Caco-2 (cell line): ENCODE measurements at regions of chr7 and their contacts with region 1.

Region 1: GRCh38 chr7:152675759-152676636 is at the start of gene XRCC2:
- DNase-seq: peak; percentile 91 to 97
- H3K4me3 ChIP-seq: peak within 1 kb of the TSS; percentile 94
- H3K4me3 Mint-ChIP-seq: peak within 1 kb of the TSS; percentile 82
- H3K27ac Mint-ChIP-seq: peak within 1 kb of the TSS; percentile 90
- H3K4me1 ChIP-seq: peaks cover 12% of the 10 kb centered on the region; the same call in 1 of the 2 replicates
- H3K4me1 Mint-ChIP-seq: peaks cover 7% of the 10 kb centered on the region
- H3K27me3 ChIP-seq: no peaks in the 10 kb centered on the region
- H3K27me3 Mint-ChIP-seq: no peaks in the 10 kb centered on the region
- CTCF ChIP-seq: no peak
- total RNA-seq, gene XRCC2: 16.8 and 18.5 TPM in 2 replicates

Region 2: GRCh38 chr7:152664636-152665035 is 11.4 kb before region 1 on chr7:
- CTCF ChIA-PET with region 1: no interaction called
- POLR2A ChIA-PET with region 1: no interaction called
- intact Hi-C with region 1: loop called (anchors 1 kb)
- DNase-seq: peak; percentile 77 to 89
- H3K4me3 ChIP-seq: no peak overlapping the region
- H3K4me3 Mint-ChIP-seq: peak overlapping the region; percentile 3
- H3K27ac Mint-ChIP-seq: peak overlapping the region; percentile 53
- H3K4me1 ChIP-seq: peaks cover 20% of the 10 kb centered on the region
- H3K4me1 Mint-ChIP-seq: peaks cover 12% of the 10 kb centered on the region
- H3K27me3 ChIP-seq: no peaks in the 10 kb centered on the region
- H3K27me3 Mint-ChIP-seq: no peaks in the 10 kb centered on the region
- CTCF ChIP-seq: no peak

Region 3: GRCh38 chr7:152723364-152723763 is 47.4 kb after region 1 on chr7:
- CTCF ChIA-PET with region 1: no interaction called
- POLR2A ChIA-PET with region 1: no interaction called
- intact Hi-C with region 1: no loop called
- DNase-seq: no peak
- H3K4me3 ChIP-seq: no peak overlapping the region
- H3K4me3 Mint-ChIP-seq: no peak overlapping the region
- H3K27ac Mint-ChIP-seq: no peak overlapping the region
- H3K4me1 ChIP-seq: no peaks in the 10 kb centered on the region
- H3K4me1 Mint-ChIP-seq: no peaks in the 10 kb centered on the region
- H3K27me3 ChIP-seq: no peaks in the 10 kb centered on the region
- H3K27me3 Mint-ChIP-seq: no peaks in the 10 kb centered on the region
- CTCF ChIP-seq: no peak

Region 4: DNA sequence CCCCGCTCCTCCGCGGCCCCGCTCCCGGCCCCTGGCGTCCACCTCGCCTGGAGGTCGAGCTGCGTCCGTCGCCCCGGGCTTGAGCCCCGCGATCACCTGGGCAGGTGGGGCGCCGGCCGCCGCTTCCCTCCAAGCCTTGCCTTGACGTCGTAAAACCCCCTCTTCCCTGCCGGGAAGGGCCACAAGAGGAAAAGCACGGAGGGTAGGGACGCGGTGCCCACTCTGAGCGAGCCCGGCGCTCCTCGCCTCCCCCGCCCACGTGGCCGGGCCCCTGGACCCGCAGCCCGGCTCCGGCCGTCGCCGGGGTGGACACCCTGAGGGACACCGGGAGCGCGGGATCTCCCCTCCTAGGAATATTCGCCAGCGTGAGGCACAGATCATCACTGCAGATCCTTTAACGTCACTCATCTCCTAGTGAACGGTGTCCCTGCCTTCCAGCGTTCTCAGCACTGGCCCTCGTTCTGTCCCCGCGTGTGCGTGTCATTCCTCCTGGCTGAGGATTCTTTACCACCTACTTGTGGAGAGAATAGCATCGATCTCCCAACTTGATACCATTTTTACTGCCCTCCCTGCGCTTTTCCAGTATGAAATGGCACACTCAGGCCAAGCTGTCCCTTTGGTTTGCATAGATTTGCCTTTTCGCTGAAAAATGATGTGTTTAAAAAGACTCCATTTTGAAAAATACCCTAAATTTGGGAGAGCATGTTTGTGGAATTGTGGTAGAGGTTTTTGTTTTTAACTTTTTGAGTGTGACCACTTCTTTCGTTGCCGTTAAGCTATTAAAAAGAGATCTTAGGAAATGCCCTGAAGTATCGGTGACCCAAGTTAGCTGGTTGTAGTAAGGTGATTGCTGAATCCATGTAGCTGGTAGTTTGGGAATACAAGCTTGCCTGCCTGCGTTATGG is 84.2 kb after region 1 on chr7:
- CTCF ChIA-PET with region 1: no interaction called
- POLR2A ChIA-PET with region 1: no interaction called
- intact Hi-C with region 1: loop called (anchors 2 kb)
- DNase-seq: peak; percentile 41 to 44
- H3K4me3 ChIP-seq: peak overlapping the region; percentile 98
- H3K4me3 Mint-ChIP-seq: peak overlapping the region; percentile 76
- H3K27ac Mint-ChIP-seq: peak overlapping the region; percentile 61
- H3K4me1 ChIP-seq: peaks cover 12% of the 10 kb centered on the region; the same call in 1 of the 2 replicates
- H3K4me1 Mint-ChIP-seq: no peaks in the 10 kb centered on the region
- H3K27me3 ChIP-seq: no peaks in the 10 kb centered on the region
- H3K27me3 Mint-ChIP-seq: peaks cover 2% of the 10 kb centered on the region
- CTCF ChIP-seq: no peak

Region 5: DNA sequence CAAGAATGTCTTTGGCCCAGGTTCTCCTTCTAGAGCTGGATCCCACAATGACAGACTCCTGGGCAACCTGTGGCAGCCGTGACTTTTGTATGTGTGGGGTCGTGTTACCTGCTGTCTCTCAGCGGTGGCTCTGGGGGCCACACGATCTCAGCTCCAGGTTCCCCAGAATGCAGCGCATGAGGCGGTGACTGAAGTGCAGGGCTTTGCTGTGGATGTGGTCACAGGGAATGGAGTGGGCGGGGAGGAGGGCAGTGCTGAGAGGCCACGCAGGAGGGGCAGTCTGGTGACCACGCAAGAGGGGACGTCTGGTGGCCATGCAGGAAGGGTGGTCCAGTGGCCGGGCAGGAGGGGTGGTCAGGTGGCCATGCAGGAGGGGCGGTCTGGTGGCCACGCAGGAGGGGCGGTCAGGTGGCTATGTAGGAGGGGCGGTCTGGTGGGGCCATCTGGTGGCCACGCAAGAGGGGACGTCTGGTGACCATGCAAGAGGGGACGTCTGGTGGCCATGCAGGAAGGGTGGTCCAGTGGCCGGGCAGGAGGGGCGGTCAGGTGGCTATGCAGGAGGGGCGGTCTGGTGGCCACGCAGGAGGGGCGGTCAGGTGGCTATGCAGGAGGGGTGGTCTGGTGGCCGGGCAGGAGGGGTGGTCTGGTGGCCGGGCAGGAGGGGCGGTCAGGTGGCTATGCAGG is 196.2 kb after region 1 on chr7:
- CTCF ChIA-PET with region 1: no interaction called
- POLR2A ChIA-PET with region 1: no interaction called
- intact Hi-C with region 1: no loop called
- DNase-seq: peak in 1 of 2 experiments; percentile 29
- H3K4me3 ChIP-seq: no peak overlapping the region
- H3K4me3 Mint-ChIP-seq: no peak overlapping the region
- H3K27ac Mint-ChIP-seq: no peak overlapping the region
- H3K4me1 ChIP-seq: no peaks in the 10 kb centered on the region
- H3K4me1 Mint-ChIP-seq: no peaks in the 10 kb centered on the region
- H3K27me3 ChIP-seq: no peaks in the 10 kb centered on the region
- H3K27me3 Mint-ChIP-seq: no peaks in the 10 kb centered on the region
- CTCF ChIP-seq: no peak